GM10248 (cell line): ENCODE measurements at regions of chr1 and their contacts with region 1.

Region 1: GRCh38 chr1:205658943-205659581 is 21.2 kb downstream of the SLC45A3 start:
- DNase-seq: peak; percentile 89
- CTCF ChIP-seq: peak; percentile 97

Region 2: DNA sequence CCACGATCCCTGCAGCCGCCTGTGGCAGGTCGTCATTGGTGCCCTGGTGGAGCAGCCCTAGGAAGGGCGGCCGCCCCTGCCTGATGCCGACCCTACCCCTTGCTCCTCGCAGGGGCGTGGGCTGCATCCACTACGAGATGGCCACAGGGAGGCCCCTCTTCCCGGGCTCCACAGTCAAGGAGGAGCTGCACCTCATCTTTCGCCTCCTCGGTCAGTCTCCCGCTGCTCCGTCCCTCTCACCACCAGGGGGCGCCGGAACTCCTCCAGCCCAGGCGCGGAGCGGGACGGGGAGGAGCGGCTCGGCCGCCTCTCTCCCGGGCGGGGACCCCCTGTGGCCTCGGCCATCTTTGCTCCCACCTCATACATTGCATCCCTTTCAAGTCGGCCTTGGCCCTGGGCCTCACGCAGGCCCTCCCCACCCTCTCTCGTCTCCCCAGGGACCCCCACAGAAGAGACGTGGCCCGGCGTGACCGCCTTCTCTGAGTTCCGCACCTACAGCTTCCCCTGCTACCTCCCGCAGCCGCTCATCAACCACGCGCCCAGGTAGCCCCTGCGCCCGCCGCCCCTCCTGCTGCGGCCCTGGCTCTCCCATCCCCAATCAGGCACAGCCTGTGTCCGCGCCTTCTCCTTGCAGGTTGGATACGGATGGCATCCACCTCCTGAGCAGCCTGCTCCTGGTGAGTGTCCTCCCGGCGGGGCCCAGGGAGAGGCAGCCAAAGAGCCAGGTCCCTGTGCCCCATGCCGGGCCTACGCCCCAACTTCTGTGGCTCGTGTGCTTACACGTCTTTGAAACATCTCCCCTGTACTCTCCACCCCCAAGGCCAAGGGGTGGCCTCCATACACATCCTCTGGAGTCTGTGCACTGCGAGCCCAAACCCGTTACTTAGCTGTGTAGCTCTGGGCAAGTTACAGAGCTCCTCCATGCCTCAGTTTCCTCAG is 129.9 kb before region 1 on chr1:
- CTCF ChIA-PET with region 1: interaction called, 247 read pairs
- POLR2A ChIA-PET with region 1: no interaction called
- DNase-seq: peak; percentile 90
- CTCF ChIP-seq: peak; percentile 97

Region 3: GRCh38 chr1:205584732-205585131 is 74.3 kb before region 1 on chr1:
- CTCF ChIA-PET with region 1: interaction called, 509 read pairs
- POLR2A ChIA-PET with region 1: no interaction called
- DNase-seq: no peak
- CTCF ChIP-seq: peak; percentile 25

Region 4: GRCh38 chr1:205645519-205645918 is 13.5 kb before region 1 on chr1:
- CTCF ChIA-PET with region 1: interaction called, 173 read pairs
- POLR2A ChIA-PET with region 1: no interaction called
- DNase-seq: no peak
- CTCF ChIP-seq: no peak

Region 5: GRCh38 chr1:205700865-205701401 is 41.9 kb after region 1 on chr1:
- CTCF ChIA-PET with region 1: interaction called, 78 read pairs
- POLR2A ChIA-PET with region 1: interaction called, 4 read pairs
- DNase-seq: no peak
- CTCF ChIP-seq: no peak

Region 6: DNA sequence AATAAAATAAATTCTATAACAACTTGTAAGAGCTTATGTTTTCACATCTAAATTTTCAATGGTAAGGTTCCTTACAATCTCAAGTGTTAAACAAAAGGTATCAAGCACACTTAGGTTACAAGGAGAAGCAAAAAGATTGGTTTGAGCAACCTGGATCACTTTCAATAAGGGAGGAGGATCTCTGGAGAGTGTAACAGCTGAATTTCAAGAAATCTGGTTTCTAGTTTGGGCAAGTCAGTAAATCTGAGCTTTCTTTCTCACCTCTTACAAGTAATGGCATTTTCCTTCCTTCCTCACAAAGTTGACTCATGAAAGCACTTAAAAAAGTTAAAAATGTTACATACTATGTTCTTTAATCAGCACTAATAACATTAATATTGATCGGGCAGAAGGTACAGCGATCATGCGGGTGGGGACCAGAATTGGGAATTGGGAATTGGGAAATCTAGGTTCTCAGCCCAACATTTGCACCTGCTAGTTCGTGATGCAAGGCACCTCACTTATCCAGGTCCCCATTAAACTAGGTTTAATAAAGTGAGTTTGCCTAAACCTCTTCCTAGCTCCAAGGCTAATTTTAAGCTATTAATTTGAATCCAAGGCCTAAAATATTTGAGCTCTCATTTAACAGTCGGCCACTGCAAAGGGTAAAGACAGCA is 87.8 kb after region 1 on chr1:
- CTCF ChIA-PET with region 1: interaction called, 10 read pairs
- POLR2A ChIA-PET with region 1: no interaction called
- DNase-seq: no peak
- CTCF ChIP-seq: no peak

Region 7: DNA sequence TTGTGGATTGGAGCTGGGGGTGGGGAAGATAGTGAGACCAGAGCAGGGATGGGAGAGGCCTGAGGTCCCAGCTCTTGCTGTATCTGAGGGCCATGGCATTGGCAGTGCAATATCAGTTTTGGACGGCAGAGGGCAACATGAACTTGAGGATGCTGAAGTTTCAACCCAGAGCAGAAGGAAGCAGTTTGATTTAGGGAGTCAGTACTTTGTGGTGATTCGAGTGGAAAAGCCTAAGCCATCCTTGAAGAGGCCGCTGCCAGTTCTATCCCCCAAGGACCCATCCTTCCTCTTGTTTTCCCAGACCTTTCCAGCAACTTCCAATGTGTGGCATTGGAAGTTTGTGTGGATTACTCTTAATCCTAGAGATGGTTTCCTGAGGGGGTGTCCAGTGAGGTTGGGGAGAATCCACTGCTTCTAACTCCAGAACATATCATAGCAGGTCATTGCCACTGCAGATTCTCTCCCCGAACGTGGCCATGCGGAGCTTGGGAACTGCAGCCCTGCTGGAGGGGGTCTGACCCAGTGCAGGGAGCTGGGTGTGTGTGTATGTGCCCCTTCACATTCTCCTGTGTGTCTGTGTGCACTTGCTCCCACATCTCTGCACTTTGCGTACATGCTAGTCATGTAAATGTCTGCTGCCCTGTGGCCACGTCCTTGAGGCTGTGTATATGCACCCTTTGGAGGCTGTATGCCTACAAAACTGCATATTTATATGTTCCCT is 260.1 kb after region 1 on chr1:
- CTCF ChIA-PET with region 1: interaction called, 19 read pairs
- POLR2A ChIA-PET with region 1: no interaction called
- DNase-seq: peak; percentile 78
- CTCF ChIP-seq: peak; percentile 94